ENCODE measurements at regions of chr1 and their contacts with region 1.

Region 1: GRCh38 chr1:30779294-30780071 is 21.9 kb upstream of the LAPTM5 start:
- DNase-seq: peak; percentile 94

Region 2: DNA sequence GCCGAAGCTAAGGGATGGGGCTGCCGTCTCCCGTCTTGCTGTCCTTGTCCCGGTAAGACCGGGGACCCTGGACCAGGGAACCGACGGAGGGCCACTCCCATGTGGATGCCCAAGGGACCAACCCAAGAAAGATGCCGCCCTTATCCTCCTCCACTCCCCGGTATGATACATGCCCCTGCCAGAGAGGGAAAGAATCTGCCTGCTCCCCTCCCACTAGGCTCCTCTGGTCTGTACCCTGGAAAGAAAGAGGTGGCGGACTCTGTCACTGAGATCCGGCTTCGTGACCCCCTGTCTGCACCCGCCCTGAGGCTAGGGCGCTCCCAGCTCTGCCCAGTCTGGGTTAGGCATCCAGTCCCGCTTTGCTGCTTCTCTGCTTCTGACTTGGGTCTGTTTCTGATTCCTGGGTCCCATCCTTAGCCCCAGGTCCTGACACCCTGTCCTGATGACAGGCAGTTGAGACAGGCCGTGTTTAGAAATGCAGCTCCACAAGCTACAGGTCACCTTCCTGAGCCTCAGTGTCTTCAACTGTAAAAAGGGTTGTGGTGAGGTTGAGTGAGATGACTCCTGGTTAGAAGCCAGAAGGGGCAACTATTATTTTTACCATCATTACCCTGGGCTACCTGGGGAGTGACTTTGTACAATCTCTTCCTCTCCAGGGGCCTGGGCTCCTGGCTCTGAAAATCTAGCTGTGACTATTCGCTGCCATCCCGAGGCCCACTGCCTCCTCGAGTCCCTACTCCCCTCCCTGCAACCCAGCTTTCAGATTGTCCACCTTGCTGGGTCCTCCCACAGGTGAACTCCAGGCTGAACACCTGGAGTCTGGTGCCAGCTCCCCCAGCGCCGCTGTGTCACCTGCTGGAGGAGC is 59.8 kb before region 1 on chr1:
- intact Hi-C with region 1: loop called (anchors 1 kb)
- DNase-seq: no peak

Region 3: DNA sequence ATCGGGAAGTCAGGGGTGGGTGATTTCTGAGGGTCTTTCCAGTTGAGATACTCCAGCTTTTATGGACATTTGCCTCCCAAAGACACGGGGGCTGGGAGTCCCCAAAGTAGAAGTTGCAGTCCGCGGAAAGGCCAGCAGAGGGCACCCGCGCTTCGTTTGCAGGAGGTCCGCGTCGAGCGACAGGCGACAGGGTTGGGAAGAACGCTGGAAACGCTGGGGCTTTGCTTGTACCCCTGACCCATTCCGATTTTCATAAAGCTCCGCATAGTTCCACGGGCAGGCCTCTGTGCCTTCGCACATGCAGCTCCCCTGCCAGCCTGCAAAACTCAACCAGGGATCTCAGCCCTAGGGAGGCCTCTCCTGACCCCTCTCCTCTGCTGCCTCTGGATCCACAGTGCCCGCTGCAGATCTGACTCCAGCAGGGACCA is 22.3 kb after region 1 on chr1:
- intact Hi-C with region 1: loop called (anchors 2 kb)
- DNase-seq: peak; percentile 93